ENCODE measurements at regions of chr7 and their contacts with region 1.

Region 1: GRCh38 chr7:92976931-92977330 is 140.6 kb upstream of the CDK6 start:
- DNase-seq: no peak
- ATAC-seq: no peak

Region 2: DNA sequence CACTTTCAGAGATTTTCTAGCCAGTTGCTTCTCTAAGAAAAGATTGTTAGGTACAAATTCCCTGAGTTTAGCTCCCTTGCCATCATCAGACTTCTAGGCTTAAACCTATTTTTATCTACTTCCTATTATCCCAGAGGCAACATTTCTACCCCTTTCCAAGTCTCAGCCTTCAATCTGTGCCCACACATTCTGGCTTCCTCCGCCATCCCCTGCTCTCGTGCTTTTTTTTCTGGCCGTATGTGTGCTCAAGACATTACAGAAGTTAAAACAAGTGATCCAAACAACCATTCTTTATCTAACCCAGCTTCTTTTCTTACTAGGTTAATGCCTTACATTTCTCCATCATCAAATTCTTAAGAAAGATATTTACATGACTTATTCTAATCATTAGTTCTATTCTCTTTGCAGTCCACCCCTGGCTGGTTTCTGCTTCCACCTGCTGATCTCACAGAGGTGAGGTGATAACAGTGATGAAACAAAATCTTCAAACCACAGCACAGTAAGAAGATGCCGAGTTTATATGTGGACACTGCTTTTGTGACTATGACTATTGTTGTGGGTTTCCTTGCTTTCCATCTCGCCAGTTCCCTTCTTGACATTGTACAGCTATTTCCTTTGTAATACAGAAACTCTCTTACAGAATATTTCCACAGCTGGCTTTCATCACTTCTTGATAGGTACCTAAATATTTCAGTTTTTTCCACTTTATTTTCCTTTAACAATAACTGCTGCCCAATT is 122.3 kb before region 1 on chr7:
- intact Hi-C with region 1: loop called (anchors 5 kb)
- DNase-seq: no peak
- ATAC-seq: no peak

Region 3: DNA sequence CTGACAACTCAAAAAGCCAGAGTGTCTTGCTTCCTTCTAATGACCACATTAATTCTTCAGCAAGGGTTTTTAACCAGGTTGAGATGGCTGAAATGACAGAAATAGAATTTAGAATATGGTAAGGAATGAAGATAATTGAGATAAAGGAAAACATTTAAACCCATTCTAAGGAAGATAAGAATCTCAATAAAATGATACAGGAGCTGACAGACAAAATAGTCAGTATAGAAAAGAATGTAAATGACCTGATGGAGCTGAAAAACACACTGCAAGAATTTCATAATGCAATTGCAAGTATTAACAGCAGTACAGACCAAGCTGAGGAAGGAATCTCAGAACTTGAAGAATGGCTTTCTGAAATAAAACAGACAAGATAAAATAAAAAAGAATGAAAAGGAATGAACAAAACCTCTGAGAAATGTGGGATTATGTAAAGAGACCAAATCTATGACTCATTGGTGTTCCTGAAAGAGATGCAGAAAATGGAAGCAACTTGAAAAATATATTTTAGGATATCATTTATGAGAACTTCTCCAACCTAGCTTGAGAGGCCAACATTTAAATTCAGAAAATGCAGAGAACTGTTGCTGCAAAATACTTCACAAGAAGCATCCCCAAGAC is 53.8 kb after region 1 on chr7:
- intact Hi-C with region 1: no loop called
- DNase-seq: no peak
- ATAC-seq: no peak

Measured in left ventricle myocardium superior (tissue), 1 donor.